Caco-2 (cell line): ENCODE measurements at regions of chr6 and their contacts with region 1.

Region 1: DNA sequence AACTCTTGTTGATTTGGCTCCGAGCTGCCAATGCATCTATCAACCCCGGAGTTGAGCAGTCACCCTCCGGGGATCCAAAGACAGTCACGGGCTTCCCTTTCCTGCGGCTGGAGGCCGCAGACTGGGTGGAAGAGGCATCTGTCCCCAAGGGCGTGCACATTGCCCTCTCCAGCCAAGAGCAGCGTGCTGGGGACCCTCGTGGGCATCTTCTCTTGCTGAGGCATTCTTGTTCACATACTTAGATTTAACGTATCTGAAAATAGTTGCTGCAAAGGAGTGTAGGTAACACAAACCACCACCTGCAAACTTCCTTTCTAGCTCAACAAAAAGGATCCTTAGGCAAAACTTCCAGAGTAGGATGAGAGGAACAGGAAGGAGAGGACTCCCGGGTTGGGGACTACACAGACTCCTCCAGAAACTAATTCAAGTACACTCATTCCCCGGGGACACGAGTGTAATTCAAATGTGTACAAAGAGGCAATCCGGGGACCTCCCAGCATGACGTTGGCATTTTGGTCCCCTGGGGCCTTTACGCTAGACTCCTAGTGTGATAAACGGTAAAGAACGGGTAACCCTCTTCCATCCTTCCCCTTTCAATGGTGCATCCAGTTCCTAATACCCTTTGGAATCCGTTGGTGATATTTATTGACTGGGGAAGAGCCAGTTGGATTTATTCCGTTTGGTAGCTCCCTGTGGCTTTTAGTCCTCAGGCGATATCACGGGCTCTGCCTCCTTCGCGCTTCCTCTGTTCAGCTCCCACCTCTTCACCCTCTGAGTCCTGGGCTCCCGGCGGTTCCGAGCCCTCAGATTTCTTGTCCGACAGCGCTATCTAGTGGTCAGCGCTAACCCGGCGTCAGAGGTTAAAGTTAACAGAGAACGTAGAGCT is 2.7 kb upstream of the COL12A1 start:
- DNase-seq: peak; percentile 73 to 83
- H3K4me3 ChIP-seq: no peak overlapping the region
- H3K4me3 Mint-ChIP-seq: peak overlapping the region; percentile 12
- H3K27ac Mint-ChIP-seq: no peak overlapping the region
- H3K4me1 ChIP-seq: peaks cover 13% of the 10 kb centered on the region
- H3K4me1 Mint-ChIP-seq: peaks cover 14% of the 10 kb centered on the region
- H3K27me3 ChIP-seq: no peaks in the 10 kb centered on the region
- H3K27me3 Mint-ChIP-seq: no peaks in the 10 kb centered on the region
- CTCF ChIP-seq: peak; percentile 79 to 81

Region 2: GRCh38 chr6:73739096-73739495 is 1469.4 kb before region 1 on chr6:
- CTCF ChIA-PET with region 1: interaction called, 12 read pairs
- POLR2A ChIA-PET with region 1: no interaction called
- intact Hi-C with region 1: loop called (anchors 1 kb)
- DNase-seq: peak in 1 of 2 experiments; percentile 56
- H3K4me3 ChIP-seq: no peak overlapping the region
- H3K4me3 Mint-ChIP-seq: no peak overlapping the region
- H3K27ac Mint-ChIP-seq: no peak overlapping the region
- H3K4me1 ChIP-seq: no peaks in the 10 kb centered on the region
- H3K4me1 Mint-ChIP-seq: no peaks in the 10 kb centered on the region
- H3K27me3 ChIP-seq: no peaks in the 10 kb centered on the region
- H3K27me3 Mint-ChIP-seq: peaks cover 3% of the 10 kb centered on the region
- CTCF ChIP-seq: peak; percentile 63 to 82

Region 3: DNA sequence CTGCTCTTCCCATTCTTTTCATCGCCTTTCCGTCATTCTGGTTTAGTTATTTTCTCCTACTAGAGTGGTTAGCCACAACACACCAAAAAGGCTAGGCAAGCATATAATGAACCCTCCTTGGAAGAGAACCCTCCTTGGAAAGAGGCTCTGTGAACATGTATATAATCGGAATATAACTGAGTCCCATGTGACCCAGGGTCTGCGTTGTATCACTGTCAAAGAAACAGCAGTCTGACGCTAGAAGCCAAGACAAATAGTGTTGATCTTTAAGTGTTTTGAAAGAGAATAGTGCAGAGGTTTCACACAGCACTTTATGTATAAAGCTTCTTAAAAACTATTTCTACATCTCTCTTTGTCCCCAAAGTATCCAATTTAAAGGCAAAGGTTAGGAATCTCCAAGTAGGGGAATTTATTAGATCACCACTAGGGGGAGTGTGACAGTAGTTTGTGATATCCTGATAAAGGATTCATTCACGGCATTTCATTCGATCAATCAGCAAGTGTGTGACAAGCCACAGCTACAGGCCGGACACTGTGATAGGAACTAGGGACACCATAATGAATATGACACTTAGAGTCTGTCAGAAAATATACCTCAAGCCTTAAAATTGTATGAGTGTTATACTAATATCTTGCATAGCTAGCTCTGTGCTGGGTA is 1117.3 kb before region 1 on chr6:
- CTCF ChIA-PET with region 1: interaction called, 3 read pairs
- POLR2A ChIA-PET with region 1: no interaction called
- intact Hi-C with region 1: loop called (anchors 1 kb)
- DNase-seq: peak in 1 of 2 experiments; percentile 41
- H3K4me3 ChIP-seq: no peak overlapping the region
- H3K4me3 Mint-ChIP-seq: no peak overlapping the region
- H3K27ac Mint-ChIP-seq: no peak overlapping the region
- H3K4me1 ChIP-seq: peaks cover 5% of the 10 kb centered on the region; the same call in 1 of the 2 replicates
- H3K4me1 Mint-ChIP-seq: no peaks in the 10 kb centered on the region
- H3K27me3 ChIP-seq: no peaks in the 10 kb centered on the region
- H3K27me3 Mint-ChIP-seq: peaks cover 2% of the 10 kb centered on the region
- CTCF ChIP-seq: peak; percentile 55 to 76

Region 4: DNA sequence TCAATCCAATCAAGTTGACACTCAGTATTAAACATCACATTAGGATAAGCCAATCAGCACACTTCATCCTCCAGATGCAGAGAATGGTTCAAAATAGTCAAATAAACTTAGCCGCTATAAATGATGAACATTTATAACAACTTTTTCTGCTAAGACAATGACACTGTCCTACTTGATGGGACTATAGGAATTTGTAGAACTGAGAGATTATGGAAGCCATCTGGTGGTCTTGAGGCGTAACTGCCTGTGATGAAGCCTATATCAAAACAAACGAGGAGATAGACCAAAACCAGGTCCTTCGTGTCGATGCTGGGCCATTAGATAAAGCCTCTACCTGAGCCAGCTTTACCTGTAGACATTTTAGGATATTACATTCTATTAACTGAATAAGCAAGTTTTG is 633.7 kb before region 1 on chr6:
- CTCF ChIA-PET with region 1: interaction called, 4 read pairs
- POLR2A ChIA-PET with region 1: no interaction called
- intact Hi-C with region 1: loop called (anchors 5 kb)
- DNase-seq: peak in 1 of 2 experiments; percentile 31
- H3K4me3 ChIP-seq: no peak overlapping the region
- H3K4me3 Mint-ChIP-seq: no peak overlapping the region
- H3K27ac Mint-ChIP-seq: no peak overlapping the region
- H3K4me1 ChIP-seq: no peaks in the 10 kb centered on the region
- H3K4me1 Mint-ChIP-seq: no peaks in the 10 kb centered on the region
- H3K27me3 ChIP-seq: no peaks in the 10 kb centered on the region
- H3K27me3 Mint-ChIP-seq: no peaks in the 10 kb centered on the region
- CTCF ChIP-seq: peak; percentile 62 to 70

Region 5: DNA sequence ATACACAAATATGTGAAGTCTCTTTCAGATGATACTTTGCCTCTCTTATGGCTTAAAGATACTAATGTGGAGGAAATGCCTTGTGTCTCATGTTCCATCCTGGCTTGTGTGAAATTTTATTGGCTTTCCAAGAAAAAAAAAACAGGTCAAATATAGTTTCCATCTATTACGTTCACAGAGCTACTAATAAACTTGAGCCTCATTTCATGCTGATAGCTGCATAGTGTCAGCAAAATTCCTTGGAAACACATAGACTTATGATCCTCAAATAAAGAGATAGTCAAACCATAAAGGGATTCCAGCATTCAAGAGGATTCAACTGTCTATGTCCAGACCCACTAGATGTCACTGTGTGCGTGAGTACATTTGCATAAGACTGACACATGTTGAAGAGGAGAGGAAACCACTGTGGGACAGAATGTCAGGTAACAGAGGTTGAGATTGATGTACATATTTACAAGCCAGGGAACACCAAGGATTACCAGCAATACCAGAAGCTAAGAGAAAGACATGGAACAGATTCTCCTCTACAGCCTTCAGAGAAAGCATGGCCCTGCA is 269.3 kb before region 1 on chr6:
- CTCF ChIA-PET with region 1: interaction called, 5 read pairs
- POLR2A ChIA-PET with region 1: no interaction called
- intact Hi-C with region 1: loop called (anchors 1 kb)
- DNase-seq: peak; percentile 56 to 57
- H3K4me3 ChIP-seq: no peak overlapping the region
- H3K4me3 Mint-ChIP-seq: no peak overlapping the region
- H3K27ac Mint-ChIP-seq: no peak overlapping the region
- H3K4me1 ChIP-seq: no peaks in the 10 kb centered on the region
- H3K4me1 Mint-ChIP-seq: peaks cover 5% of the 10 kb centered on the region
- H3K27me3 ChIP-seq: no peaks in the 10 kb centered on the region
- H3K27me3 Mint-ChIP-seq: no peaks in the 10 kb centered on the region
- CTCF ChIP-seq: peak in 1 of 2 experiments; percentile 40

Region 6: GRCh38 chr6:75155631-75156030 is 52.9 kb before region 1 on chr6:
- CTCF ChIA-PET with region 1: interaction called, 3 read pairs
- POLR2A ChIA-PET with region 1: no interaction called
- intact Hi-C with region 1: loop called (anchors 1 kb)
- DNase-seq: no peak
- H3K4me3 ChIP-seq: no peak overlapping the region
- H3K4me3 Mint-ChIP-seq: no peak overlapping the region
- H3K27ac Mint-ChIP-seq: peak overlapping the region; percentile 42
- H3K4me1 ChIP-seq: peaks cover 21% of the 10 kb centered on the region
- H3K4me1 Mint-ChIP-seq: peaks cover 17% of the 10 kb centered on the region
- H3K27me3 ChIP-seq: no peaks in the 10 kb centered on the region
- H3K27me3 Mint-ChIP-seq: no peaks in the 10 kb centered on the region
- CTCF ChIP-seq: no peak